A673 (cell line): ENCODE measurements at regions of chr3 and their contacts with region 1.

Region 1: GRCh38 chr3:186108941-186109865 is at the start of gene ETV5:
- DNase-seq: peak; percentile 100
- H3K4me3 ChIP-seq: peak within 1 kb of the TSS; percentile 70
- H3K27ac ChIP-seq: peak within 1 kb of the TSS; percentile 89
- H3K4me1 ChIP-seq: peaks cover 35% of the 10 kb centered on the region
- H3K27me3 ChIP-seq: no peaks in the 10 kb centered on the region
- CTCF ChIP-seq: no peak
- total RNA-seq, gene ETV5: 87.4 and 92.9 TPM in 2 replicates

Region 2: DNA sequence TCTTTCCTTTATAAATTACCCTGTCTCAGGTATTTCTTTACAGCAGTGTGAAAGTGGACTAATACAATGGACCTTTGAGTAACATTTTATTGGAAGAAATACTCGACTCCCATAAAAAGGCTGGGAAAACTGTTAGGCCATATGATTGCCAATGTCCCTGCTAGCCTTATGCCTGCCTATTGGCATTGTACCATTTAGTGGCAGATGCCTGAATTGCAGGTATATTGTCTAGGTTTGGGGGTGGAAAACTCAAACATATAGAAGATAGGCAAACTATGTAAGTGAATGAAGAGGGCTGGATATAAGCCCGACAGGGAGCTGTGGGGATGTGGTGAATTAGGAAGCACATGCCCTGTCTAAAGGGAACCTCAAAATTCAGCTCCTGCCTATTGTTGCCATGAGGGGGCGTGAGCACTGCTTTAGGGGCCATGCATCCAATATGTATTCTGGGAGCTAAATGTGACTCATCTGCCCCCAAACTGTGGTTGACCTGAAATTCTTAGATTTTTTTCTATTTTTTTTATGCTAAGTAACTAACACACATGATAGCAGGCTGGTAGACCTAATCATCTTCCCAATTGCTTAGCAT is 106.2 kb before region 1 on chr3:
- CTCF ChIA-PET with region 1: no interaction called
- POLR2A ChIA-PET with region 1: no interaction called
- intact Hi-C with region 1: loop called (anchors 5 kb)
- DNase-seq: peak; percentile 73
- H3K4me3 ChIP-seq: no peak overlapping the region
- H3K27ac ChIP-seq: no peak overlapping the region
- H3K4me1 ChIP-seq: no peaks in the 10 kb centered on the region
- H3K27me3 ChIP-seq: no peaks in the 10 kb centered on the region
- CTCF ChIP-seq: peak; percentile 61

Region 3: GRCh38 chr3:186097663-186098451 is 11.3 kb before region 1 on chr3:
- CTCF ChIA-PET with region 1: no interaction called
- POLR2A ChIA-PET with region 1: interaction called, 4 read pairs
- intact Hi-C with region 1: loop called (anchors 1 kb)
- DNase-seq: peak; percentile 99
- H3K4me3 ChIP-seq: peak overlapping the region; percentile 38
- H3K27ac ChIP-seq: peak overlapping the region; percentile 67
- H3K4me1 ChIP-seq: peaks cover 65% of the 10 kb centered on the region
- H3K27me3 ChIP-seq: no peaks in the 10 kb centered on the region
- CTCF ChIP-seq: no peak

Region 4: GRCh38 chr3:186241910-186242821 is 133.0 kb after region 1 on chr3:
- CTCF ChIA-PET with region 1: interaction called, 6 read pairs
- POLR2A ChIA-PET with region 1: interaction called, 6 read pairs
- intact Hi-C with region 1: loop called (anchors 2 kb)
- DNase-seq: peak; percentile 96
- H3K4me3 ChIP-seq: peak overlapping the region; percentile 46
- H3K27ac ChIP-seq: peak overlapping the region; percentile 82
- H3K4me1 ChIP-seq: peaks cover 32% of the 10 kb centered on the region
- H3K27me3 ChIP-seq: no peaks in the 10 kb centered on the region
- CTCF ChIP-seq: peak; percentile 78

Region 5: GRCh38 chr3:186566851-186567675 is 457.9 kb after region 1 on chr3 and contains the start of gene TBCCD1:
- CTCF ChIA-PET with region 1: no interaction called
- POLR2A ChIA-PET with region 1: no interaction called
- intact Hi-C with region 1: loop called (anchors 10 kb)
- DNase-seq: peak; percentile 91
- H3K4me3 ChIP-seq: peak within 1 kb of the TSS; percentile 91
- H3K27ac ChIP-seq: peak within 1 kb of the TSS; percentile 85
- H3K4me1 ChIP-seq: peaks cover 13% of the 10 kb centered on the region
- H3K27me3 ChIP-seq: no peaks in the 10 kb centered on the region
- CTCF ChIP-seq: no peak
- total RNA-seq, gene TBCCD1: 19.4 and 20.1 TPM in 2 replicates